T-cell (primary cell): ENCODE measurements at regions of chr21 and their contacts with region 1.

Region 1: GRCh38 chr21:17545007-17545406 is 32.2 kb downstream of the CXADR start:
- DNase-seq: no peak
- ATAC-seq: no peak
- H3K4me3 ChIP-seq: no peak overlapping the region
- H3K4me3 Mint-ChIP-seq: no peak overlapping the region
- H3K27ac ChIP-seq: no peak overlapping the region
- H3K27ac Mint-ChIP-seq: no peak overlapping the region
- H3K4me1 ChIP-seq: no peaks in the 10 kb centered on the region
- H3K4me1 Mint-ChIP-seq: no peaks in the 10 kb centered on the region
- H3K27me3 ChIP-seq: no peaks in the 10 kb centered on the region
- H3K27me3 Mint-ChIP-seq: peaks cover 0 to 2% of the 10 kb centered on the region in 2 donors

Region 2: GRCh38 chr21:17532292-17532691 is 12.7 kb before region 1 on chr21:
- CTCF ChIA-PET with region 1: no interaction called
- POLR2A ChIA-PET with region 1: no interaction called
- DNase-seq: no peak
- ATAC-seq: no peak
- H3K4me3 ChIP-seq: no peak overlapping the region
- H3K4me3 Mint-ChIP-seq: no peak overlapping the region
- H3K27ac ChIP-seq: no peak overlapping the region
- H3K27ac Mint-ChIP-seq: no peak overlapping the region
- H3K4me1 ChIP-seq: no peaks in the 10 kb centered on the region
- H3K4me1 Mint-ChIP-seq: no peaks in the 10 kb centered on the region
- H3K27me3 ChIP-seq: peaks cover 0 to 10% of the 10 kb centered on the region in 2 experiments
- H3K27me3 Mint-ChIP-seq: peaks cover 0 to 4% of the 10 kb centered on the region in 2 donors

Region 3: GRCh38 chr21:17598437-17598836 is 53.4 kb after region 1 on chr21:
- CTCF ChIA-PET with region 1: interaction called in 1 of 2 experiments, 17 read pairs
- POLR2A ChIA-PET with region 1: interaction called in 1 of 2 experiments, 6 read pairs
- DNase-seq: no peak
- ATAC-seq: no peak
- H3K4me3 ChIP-seq: no peak overlapping the region
- H3K4me3 Mint-ChIP-seq: no peak overlapping the region
- H3K27ac ChIP-seq: no peak overlapping the region
- H3K27ac Mint-ChIP-seq: no peak overlapping the region
- H3K4me1 ChIP-seq: no peaks in the 10 kb centered on the region
- H3K4me1 Mint-ChIP-seq: peaks cover 0 to 15% (median 9%) of the 10 kb centered on the region in 3 donors
- H3K27me3 ChIP-seq: no peaks in the 10 kb centered on the region
- H3K27me3 Mint-ChIP-seq: no peaks in the 10 kb centered on the region